ENCODE measurements at regions of chr11 and their contacts with region 1.

Region 1: GRCh38 chr11:72483412-72484186 is 49.3 kb upstream of the CLPB start:
- DNase-seq: peak; percentile 92
- H3K4me3 ChIP-seq: no peak overlapping the region
- H3K27ac ChIP-seq: peak overlapping the region; percentile 55
- H3K4me1 ChIP-seq: peaks cover 10% of the 10 kb centered on the region
- H3K27me3 ChIP-seq: peaks cover 10 to 11% of the 10 kb centered on the region in 2 experiments
- CTCF ChIP-seq: no peak
- POLR2A ChIP-seq: no peak

Region 2: DNA sequence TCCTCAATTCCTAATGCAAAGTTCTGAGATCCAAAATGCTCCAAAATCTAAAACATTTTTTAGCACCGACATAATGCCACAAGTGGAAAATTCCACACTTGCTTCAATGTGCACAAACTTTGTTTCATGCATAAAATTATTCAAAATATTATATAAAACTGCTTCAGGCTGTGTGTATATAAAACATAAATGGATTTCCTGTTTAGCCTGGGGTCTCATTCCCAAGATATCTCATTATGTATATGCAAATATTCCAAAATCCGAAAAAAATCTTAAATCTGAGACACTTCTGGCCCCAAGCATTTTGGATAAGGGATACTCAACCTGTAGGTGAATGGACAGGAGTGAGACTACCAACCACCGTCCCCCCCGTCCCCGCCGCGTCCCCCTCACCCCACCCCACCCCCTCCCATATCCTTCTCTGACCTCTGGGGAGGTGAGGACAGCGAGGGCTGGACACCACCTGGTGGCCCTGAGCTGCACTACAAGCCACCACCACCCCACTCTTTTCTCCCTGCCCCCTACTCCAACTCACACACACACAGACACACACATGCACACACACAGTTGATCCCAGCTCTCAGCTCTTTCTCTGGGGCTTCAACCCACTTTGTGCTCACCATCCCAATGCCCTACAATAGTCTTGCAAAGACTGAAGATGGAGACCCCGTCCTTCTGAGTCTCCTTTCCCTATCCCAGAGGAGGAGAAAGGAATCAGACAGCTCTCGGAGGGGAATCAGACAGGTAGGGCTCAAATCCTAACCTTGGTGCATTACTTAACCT is 89.7 kb after region 1 on chr11:
- CTCF ChIA-PET with region 1: interaction called, 8 read pairs
- POLR2A ChIA-PET with region 1: no interaction called
- dilution Hi-C with region 1: no loop called
- intact Hi-C with region 1: loop called (anchors 1 kb)
- DNase-seq: peak; percentile 46
- H3K4me3 ChIP-seq: no peak overlapping the region
- H3K27ac ChIP-seq: no peak overlapping the region
- H3K4me1 ChIP-seq: no peaks in the 10 kb centered on the region
- H3K27me3 ChIP-seq: no peaks in the 10 kb centered on the region
- CTCF ChIP-seq: peak; percentile 32 to 75
- POLR2A ChIP-seq: no peak